ENCODE measurements at regions of chr17 and their contacts with region 1.

Region 1: GRCh38 chr17:77404812-77405581 is 264.2 kb downstream of the SEC14L1 start:
- DNase-seq: peak; percentile 82 to 93
- ATAC-seq: peak; percentile 82 to 88 (median 86)
- H3K4me3 ChIP-seq: peak overlapping the region; percentile 54
- H3K4me3 Mint-ChIP-seq: peak overlapping the region; percentile 80
- H3K27ac ChIP-seq: peak overlapping the region; percentile 81
- H3K27ac Mint-ChIP-seq: peak overlapping the region; percentile 92 to 98
- H3K4me1 ChIP-seq: peaks cover 100% of the 10 kb centered on the region
- H3K4me1 Mint-ChIP-seq: peaks cover 83 to 96% of the 10 kb centered on the region in 2 donors
- H3K27me3 ChIP-seq: no peaks in the 10 kb centered on the region
- H3K27me3 Mint-ChIP-seq: no peaks in the 10 kb centered on the region
- CTCF ChIP-seq: no peak

Region 2: DNA sequence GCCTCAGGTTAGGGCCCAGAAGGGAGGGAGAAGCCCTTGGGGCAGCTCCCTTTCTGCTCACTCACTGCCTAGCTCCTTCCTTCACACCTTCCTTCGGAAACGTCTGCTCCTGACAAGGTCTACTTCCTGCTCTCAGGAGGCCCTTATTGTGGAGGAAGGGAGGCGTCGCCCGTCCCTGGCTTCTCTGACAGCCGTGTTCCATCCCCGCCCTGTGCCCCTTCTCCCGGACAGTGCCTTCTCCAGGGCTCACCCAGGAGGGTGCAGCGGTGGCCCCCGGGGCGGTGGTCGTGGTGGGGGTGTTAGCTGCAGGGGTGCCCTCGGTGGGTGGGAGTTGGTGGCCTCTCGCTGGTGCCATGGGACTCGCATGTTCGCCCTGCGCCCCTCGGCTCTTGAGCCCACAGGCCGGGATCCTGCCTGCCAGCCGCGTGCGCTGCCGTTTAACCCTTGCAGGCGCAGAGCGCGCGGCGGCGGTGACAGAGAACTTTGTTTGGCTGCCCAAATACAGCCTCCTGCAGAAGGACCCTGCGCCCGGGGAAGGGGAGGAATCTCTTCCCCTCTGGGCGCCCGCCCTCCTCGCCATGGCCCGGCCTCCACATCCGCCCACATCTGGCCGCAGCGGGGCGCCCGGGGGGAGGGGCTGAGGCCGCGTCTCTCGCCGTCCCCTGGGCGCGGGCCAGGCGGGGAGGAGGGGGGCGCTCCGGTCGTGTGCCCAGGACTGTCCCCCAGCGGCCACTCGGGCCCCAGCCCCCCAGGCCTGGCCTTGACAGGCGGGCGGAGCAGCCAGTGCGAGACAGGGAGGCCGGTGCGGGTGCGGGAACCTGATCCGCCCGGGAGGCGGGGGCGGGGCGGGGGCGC is 32.3 kb before region 1 on chr17:
- intact Hi-C with region 1: loop called (anchors 2 kb)
- DNase-seq: peak; percentile 75 to 76
- ATAC-seq: peak; percentile 54 to 71 (median 66)
- H3K4me3 ChIP-seq: peak overlapping the region; percentile 72
- H3K4me3 Mint-ChIP-seq: peak overlapping the region; percentile 81
- H3K27ac ChIP-seq: peak overlapping the region; percentile 44
- H3K27ac Mint-ChIP-seq: peak overlapping the region; percentile 72 to 82
- H3K4me1 ChIP-seq: peaks cover 60% of the 10 kb centered on the region
- H3K4me1 Mint-ChIP-seq: peaks cover 43 to 58% of the 10 kb centered on the region in 2 donors
- H3K27me3 ChIP-seq: no peaks in the 10 kb centered on the region
- H3K27me3 Mint-ChIP-seq: peaks cover 0 to 2% of the 10 kb centered on the region in 2 donors
- CTCF ChIP-seq: no peak

Region 3: GRCh38 chr17:77444984-77445759 is 40.2 kb after region 1 on chr17:
- intact Hi-C with region 1: loop called (anchors 2 kb)
- DNase-seq: peak; percentile 77 to 98
- ATAC-seq: peak; percentile 61 to 84 (median 72)
- H3K4me3 ChIP-seq: peak overlapping the region; percentile 27
- H3K4me3 Mint-ChIP-seq: peak overlapping the region; percentile 67
- H3K27ac ChIP-seq: peak overlapping the region; percentile 90
- H3K27ac Mint-ChIP-seq: peak overlapping the region; percentile 86
- H3K4me1 ChIP-seq: peaks cover 98% of the 10 kb centered on the region
- H3K4me1 Mint-ChIP-seq: peaks cover 74 to 87% of the 10 kb centered on the region in 2 donors
- H3K27me3 ChIP-seq: no peaks in the 10 kb centered on the region
- H3K27me3 Mint-ChIP-seq: no peaks in the 10 kb centered on the region
- CTCF ChIP-seq: no peak

Region 4: GRCh38 chr17:77465358-77466041 is 60.5 kb after region 1 on chr17:
- intact Hi-C with region 1: loop called (anchors 1 kb)
- DNase-seq: peak; percentile 58 to 91
- ATAC-seq: peak; percentile 82 to 92 (median 89)
- H3K4me3 ChIP-seq: peak overlapping the region; percentile 4
- H3K4me3 Mint-ChIP-seq: peak overlapping the region; percentile 77
- H3K27ac ChIP-seq: peak overlapping the region; percentile 74
- H3K27ac Mint-ChIP-seq: peak overlapping the region; percentile 92 to 97
- H3K4me1 ChIP-seq: peaks cover 98% of the 10 kb centered on the region
- H3K4me1 Mint-ChIP-seq: peaks cover 78 to 93% of the 10 kb centered on the region in 2 donors
- H3K27me3 ChIP-seq: no peaks in the 10 kb centered on the region
- H3K27me3 Mint-ChIP-seq: no peaks in the 10 kb centered on the region
- CTCF ChIP-seq: no peak

Region 5: GRCh38 chr17:77494664-77495435 is 89.9 kb after region 1 on chr17:
- intact Hi-C with region 1: loop called (anchors 1 kb)
- DNase-seq: peak; percentile 77 to 88
- ATAC-seq: peak; percentile 85 to 96 (median 90)
- H3K4me3 ChIP-seq: no peak overlapping the region
- H3K4me3 Mint-ChIP-seq: peak overlapping the region; percentile 37
- H3K27ac ChIP-seq: no peak overlapping the region
- H3K27ac Mint-ChIP-seq: peak overlapping the region; percentile 41 to 80
- H3K4me1 ChIP-seq: peaks cover 43% of the 10 kb centered on the region
- H3K4me1 Mint-ChIP-seq: peaks cover 7 to 21% of the 10 kb centered on the region in 2 donors
- H3K27me3 ChIP-seq: no peaks in the 10 kb centered on the region
- H3K27me3 Mint-ChIP-seq: no peaks in the 10 kb centered on the region
- CTCF ChIP-seq: peak; percentile 99